CD8-positive, alpha-beta T cell (primary cell): ENCODE measurements at regions of chr17 and their contacts with region 1.

Region 1: GRCh38 chr17:76103274-76104139 is at the start of gene EXOC7:
- DNase-seq: peak; percentile 83 to 97 (median 93)
- ATAC-seq: peak; percentile 93
- H3K4me3 ChIP-seq: peak within 1 kb of the TSS; percentile 74 to 75
- H3K4me3 Mint-ChIP-seq: peak within 1 kb of the TSS; percentile 98
- H3K27ac ChIP-seq: peak within 1 kb of the TSS; percentile 61 to 77
- H3K27ac Mint-ChIP-seq: peak within 1 kb of the TSS; percentile 95
- H3K4me1 ChIP-seq: peaks cover 21% of the 10 kb centered on the region
- H3K4me1 Mint-ChIP-seq: peaks cover 29% of the 10 kb centered on the region
- H3K27me3 ChIP-seq: no peaks in the 10 kb centered on the region
- H3K27me3 Mint-ChIP-seq: no peaks in the 10 kb centered on the region
- CTCF ChIP-seq: no peak
- total RNA-seq, gene EXOC7: 97.3 to 101 TPM

Region 2: GRCh38 chr17:76072148-76072858 is 31.2 kb before region 1 on chr17 and contains the start of gene SRP68:
- CTCF ChIA-PET with region 1: no interaction called
- POLR2A ChIA-PET with region 1: interaction called, 7 read pairs
- intact Hi-C with region 1: loop called in 1 of 2 experiments (anchors 1 kb)
- DNase-seq: peak; percentile 63 to 91 (median 83)
- ATAC-seq: peak; percentile 82
- H3K4me3 ChIP-seq: peak within 1 kb of the TSS; percentile 86 to 98
- H3K4me3 Mint-ChIP-seq: peak within 1 kb of the TSS; percentile 96
- H3K27ac ChIP-seq: peak within 1 kb of the TSS; percentile 77 to 81
- H3K27ac Mint-ChIP-seq: peak within 1 kb of the TSS; percentile 95
- H3K4me1 ChIP-seq: peaks cover 44% of the 10 kb centered on the region
- H3K4me1 Mint-ChIP-seq: peaks cover 53% of the 10 kb centered on the region
- H3K27me3 ChIP-seq: peaks cover 18 to 28% of the 10 kb centered on the region in 2 experiments
- H3K27me3 Mint-ChIP-seq: peaks cover 19% of the 10 kb centered on the region
- CTCF ChIP-seq: no peak
- total RNA-seq, gene SRP68: 93.6 to 99.9 TPM